Activated CD4-positive, alpha-beta memory T cell treated with anti-CD3 and anti-CD28 coated beads for 36 hours (primary cell): ENCODE measurements at regions of chr2 and their contacts with region 1.

Region 1: GRCh38 chr2:241965931-241966412 is 96.4 kb downstream of the RTP5 start:
- DNase-seq: peak; percentile 89
- H3K4me3 Mint-ChIP-seq: peak overlapping the region; percentile 58
- H3K27ac Mint-ChIP-seq: peak overlapping the region; percentile 78
- H3K4me1 Mint-ChIP-seq: peaks cover 26% of the 10 kb centered on the region
- H3K27me3 Mint-ChIP-seq: no peaks in the 10 kb centered on the region

Region 2: GRCh38 chr2:241617431-241618154 is 348.4 kb before region 1 on chr2:
- CTCF ChIA-PET with region 1: no interaction called
- POLR2A ChIA-PET with region 1: no interaction called
- intact Hi-C with region 1: loop called (anchors 2 kb)
- DNase-seq: peak; percentile 63
- H3K4me3 Mint-ChIP-seq: peak overlapping the region; percentile 74
- H3K27ac Mint-ChIP-seq: peak overlapping the region; percentile 87
- H3K4me1 Mint-ChIP-seq: peaks cover 47% of the 10 kb centered on the region
- H3K27me3 Mint-ChIP-seq: no peaks in the 10 kb centered on the region

Region 3: GRCh38 chr2:241774646-241775222 is 191.2 kb before region 1 on chr2:
- CTCF ChIA-PET with region 1: no interaction called
- POLR2A ChIA-PET with region 1: no interaction called
- intact Hi-C with region 1: no loop called
- DNase-seq: peak; percentile 7
- H3K4me3 Mint-ChIP-seq: no peak overlapping the region
- H3K27ac Mint-ChIP-seq: no peak overlapping the region
- H3K4me1 Mint-ChIP-seq: peaks cover 6% of the 10 kb centered on the region
- H3K27me3 Mint-ChIP-seq: no peaks in the 10 kb centered on the region

Region 4: GRCh38 chr2:241950413-241951315 is 15.3 kb before region 1 on chr2:
- CTCF ChIA-PET with region 1: interaction called, 19 read pairs
- POLR2A ChIA-PET with region 1: interaction called, 3 read pairs
- intact Hi-C with region 1: no loop called
- DNase-seq: peak; percentile 68
- H3K4me3 Mint-ChIP-seq: no peak overlapping the region
- H3K27ac Mint-ChIP-seq: no peak overlapping the region
- H3K4me1 Mint-ChIP-seq: peaks cover 2% of the 10 kb centered on the region
- H3K27me3 Mint-ChIP-seq: no peaks in the 10 kb centered on the region

Region 5: DNA sequence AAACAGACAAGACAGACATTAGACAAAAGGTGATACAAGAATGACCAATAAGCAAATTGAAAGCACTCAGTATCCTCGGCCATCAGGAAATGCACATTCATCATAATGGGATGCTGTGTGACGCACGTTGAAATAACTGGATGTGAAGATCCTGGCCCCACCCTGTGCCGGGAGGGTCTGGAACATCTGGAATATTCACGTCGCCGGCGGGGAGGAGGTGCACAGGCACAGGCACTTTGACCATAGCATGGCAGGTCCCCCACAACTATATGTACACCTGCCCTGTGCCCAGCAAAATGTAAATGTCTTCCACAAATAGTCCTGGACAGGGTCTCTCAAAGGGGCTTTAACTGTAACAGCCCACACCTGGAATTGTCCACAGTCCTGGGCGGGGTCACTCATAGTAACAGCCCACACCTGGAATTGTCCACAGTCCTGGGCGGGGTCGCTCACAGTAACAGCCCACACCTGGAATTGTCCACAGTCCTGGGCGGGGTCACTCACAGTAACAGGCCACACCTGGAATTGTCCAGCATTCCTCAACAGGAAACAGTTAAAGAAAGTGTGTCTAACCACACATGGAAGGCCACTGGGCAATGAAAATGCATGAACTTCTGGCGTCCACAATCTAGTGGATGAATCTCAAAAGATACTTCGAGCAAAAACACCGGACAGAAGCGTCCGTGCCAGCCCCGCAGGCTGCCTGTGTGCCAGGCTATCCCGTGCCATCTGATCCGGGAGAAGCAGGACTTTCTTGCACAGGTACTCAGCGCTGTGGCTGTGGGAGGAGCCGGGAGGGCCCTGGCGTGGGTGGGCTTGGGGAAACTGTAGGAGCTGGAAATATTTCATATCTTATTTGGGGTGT is 17.0 kb after region 1 on chr2:
- CTCF ChIA-PET with region 1: no interaction called
- POLR2A ChIA-PET with region 1: no interaction called
- intact Hi-C with region 1: no loop called
- DNase-seq: no peak
- H3K4me3 Mint-ChIP-seq: no peak overlapping the region
- H3K27ac Mint-ChIP-seq: no peak overlapping the region
- H3K4me1 Mint-ChIP-seq: peaks cover 13% of the 10 kb centered on the region
- H3K27me3 Mint-ChIP-seq: no peaks in the 10 kb centered on the region

Region 6: DNA sequence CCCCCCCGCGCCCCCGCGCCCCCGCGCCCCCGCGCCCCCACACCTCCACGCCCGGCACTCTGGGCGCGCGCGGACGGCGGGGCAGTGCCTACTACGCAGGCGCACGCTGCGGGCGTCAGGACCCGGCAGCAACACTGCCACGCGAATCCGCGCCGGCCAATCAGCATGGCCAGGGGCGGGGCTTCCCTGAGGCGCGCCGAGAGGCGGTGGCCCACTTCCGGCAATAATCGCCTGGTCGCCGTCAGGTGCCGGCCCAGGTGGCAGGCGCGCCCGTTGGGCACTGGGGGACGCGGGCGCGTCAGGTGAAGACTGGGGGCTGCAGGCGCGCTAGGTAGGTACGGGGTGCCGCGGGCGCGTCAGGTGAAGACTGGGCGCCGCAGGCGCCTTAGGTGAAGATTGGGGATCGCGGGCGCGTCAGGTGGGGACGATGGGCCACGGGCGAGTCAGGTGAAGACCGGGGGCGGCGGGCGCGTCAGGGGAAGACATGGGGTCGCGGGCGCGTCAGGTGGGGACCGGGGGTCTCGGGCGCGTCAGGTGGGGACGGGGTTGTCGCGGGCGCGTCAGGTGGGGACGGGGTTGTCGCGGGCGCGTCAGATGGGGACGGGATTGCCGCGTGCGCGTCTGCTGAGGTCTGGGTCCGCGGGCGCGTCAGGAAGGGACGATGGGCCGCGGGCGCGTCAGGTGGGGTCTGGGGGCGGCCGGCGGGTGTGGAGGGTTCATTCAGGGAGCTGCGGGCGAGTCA is 122.7 kb after region 1 on chr2:
- CTCF ChIA-PET with region 1: no interaction called
- POLR2A ChIA-PET with region 1: no interaction called
- intact Hi-C with region 1: loop called (anchors 5 kb)
- DNase-seq: peak; percentile 95
- H3K4me3 Mint-ChIP-seq: peak overlapping the region; percentile 82
- H3K27ac Mint-ChIP-seq: peak overlapping the region; percentile 18
- H3K4me1 Mint-ChIP-seq: peaks cover 37% of the 10 kb centered on the region
- H3K27me3 Mint-ChIP-seq: no peaks in the 10 kb centered on the region